ENCODE measurements at regions of chr18 and their contacts with region 1.

Region 1: GRCh38 chr18:2536493-2536892 is 34.8 kb downstream of the METTL4 start:
- DNase-seq: no peak
- ATAC-seq: no peak
- H3K4me3 Mint-ChIP-seq: no peak overlapping the region
- H3K27ac Mint-ChIP-seq: no peak overlapping the region
- H3K4me1 Mint-ChIP-seq: no peaks in the 10 kb centered on the region
- H3K27me3 Mint-ChIP-seq: no peaks in the 10 kb centered on the region

Region 2: DNA sequence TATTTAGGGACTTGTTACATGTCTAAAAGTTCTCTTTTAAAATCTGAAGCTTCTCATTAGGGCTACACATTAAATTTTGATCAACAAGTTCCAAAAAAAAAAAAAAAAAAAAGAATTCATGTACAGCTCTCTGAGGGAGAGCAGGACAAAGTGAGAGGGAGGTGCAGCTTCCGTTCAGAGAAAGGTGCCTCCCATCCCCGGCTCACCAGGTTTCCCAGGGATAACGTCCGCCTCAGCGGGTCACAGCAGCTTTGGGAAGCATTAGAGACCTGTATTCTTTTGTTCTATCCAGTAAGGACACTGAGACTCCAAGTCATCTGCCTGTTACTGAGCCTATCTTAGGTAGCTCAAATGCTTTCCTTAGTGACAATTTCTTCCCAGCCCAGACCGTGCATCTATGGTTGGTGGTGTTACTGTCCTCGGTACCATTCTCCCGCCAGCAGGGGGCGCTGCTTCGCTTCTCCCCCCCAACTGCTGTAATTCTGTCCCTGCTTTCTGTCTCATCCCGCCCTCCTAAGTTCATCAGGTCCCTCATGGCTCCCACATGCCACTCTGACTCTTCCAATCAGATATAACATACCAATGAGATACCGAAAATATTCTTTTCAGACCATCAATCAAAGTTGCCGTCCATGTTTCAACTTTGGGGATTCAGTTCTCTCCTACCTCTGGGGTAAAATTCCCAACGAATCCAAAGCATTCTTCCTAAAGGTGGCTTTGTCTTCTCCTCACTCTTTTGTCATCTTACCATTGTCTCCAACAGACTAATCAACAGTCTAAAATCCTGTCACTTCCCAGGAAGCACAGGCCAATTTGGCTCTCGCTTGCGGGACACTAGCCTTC is 431.7 kb before region 1 on chr18:
- CTCF ChIA-PET with region 1: interaction called, 20 read pairs
- POLR2A ChIA-PET with region 1: no interaction called
- DNase-seq: peak; percentile 66
- ATAC-seq: peak; percentile 84
- H3K4me3 Mint-ChIP-seq: no peak overlapping the region
- H3K27ac Mint-ChIP-seq: no peak overlapping the region
- H3K4me1 Mint-ChIP-seq: no peaks in the 10 kb centered on the region
- H3K27me3 Mint-ChIP-seq: no peaks in the 10 kb centered on the region

Region 3: DNA sequence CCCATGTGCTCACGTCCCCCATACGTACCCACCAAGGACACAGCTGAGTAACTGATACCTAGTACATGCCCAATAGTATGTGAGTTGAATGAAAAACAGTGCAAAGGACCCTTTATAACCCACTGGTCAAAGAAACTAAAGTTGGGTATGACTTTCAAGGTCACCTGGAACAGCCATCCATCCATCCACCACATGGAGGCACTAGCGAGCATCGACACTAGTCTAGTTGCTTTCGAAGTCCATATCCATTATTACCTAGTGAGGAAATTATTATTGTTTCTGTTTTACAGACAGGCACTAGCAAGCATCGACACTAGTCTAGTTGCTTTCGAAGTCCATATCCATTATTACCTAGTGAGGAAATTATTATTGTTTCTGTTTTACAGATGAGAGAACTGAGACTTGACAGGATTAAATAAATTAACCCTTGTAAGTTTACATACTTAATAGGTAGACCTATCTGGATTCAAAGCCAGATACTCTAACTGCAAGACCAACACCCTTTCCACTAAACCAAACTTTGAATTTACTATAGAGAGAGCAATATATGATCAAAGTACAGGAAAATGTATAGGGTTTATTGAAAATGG is 198.8 kb before region 1 on chr18:
- CTCF ChIA-PET with region 1: interaction called, 39 read pairs
- POLR2A ChIA-PET with region 1: no interaction called
- DNase-seq: peak; percentile 56
- ATAC-seq: peak; percentile 44
- H3K4me3 Mint-ChIP-seq: no peak overlapping the region
- H3K27ac Mint-ChIP-seq: no peak overlapping the region
- H3K4me1 Mint-ChIP-seq: peaks cover 12% of the 10 kb centered on the region
- H3K27me3 Mint-ChIP-seq: peaks cover 20% of the 10 kb centered on the region

Region 4: GRCh38 chr18:2466978-2467377 is 69.5 kb before region 1 on chr18:
- CTCF ChIA-PET with region 1: no interaction called
- POLR2A ChIA-PET with region 1: no interaction called
- DNase-seq: no peak
- ATAC-seq: no peak
- H3K4me3 Mint-ChIP-seq: no peak overlapping the region
- H3K27ac Mint-ChIP-seq: no peak overlapping the region
- H3K4me1 Mint-ChIP-seq: no peaks in the 10 kb centered on the region
- H3K27me3 Mint-ChIP-seq: peaks cover 2% of the 10 kb centered on the region

Measured in activated CD8-positive, alpha-beta T cell treated with anti-CD3 and anti-CD28 coated beads, Interleukin-2, amount 10 ng/mL, durations not matched to agents 7 days and 5 days (primary cell).